ENCODE measurements at regions of chr2 and their contacts with region 1.

Region 1: DNA sequence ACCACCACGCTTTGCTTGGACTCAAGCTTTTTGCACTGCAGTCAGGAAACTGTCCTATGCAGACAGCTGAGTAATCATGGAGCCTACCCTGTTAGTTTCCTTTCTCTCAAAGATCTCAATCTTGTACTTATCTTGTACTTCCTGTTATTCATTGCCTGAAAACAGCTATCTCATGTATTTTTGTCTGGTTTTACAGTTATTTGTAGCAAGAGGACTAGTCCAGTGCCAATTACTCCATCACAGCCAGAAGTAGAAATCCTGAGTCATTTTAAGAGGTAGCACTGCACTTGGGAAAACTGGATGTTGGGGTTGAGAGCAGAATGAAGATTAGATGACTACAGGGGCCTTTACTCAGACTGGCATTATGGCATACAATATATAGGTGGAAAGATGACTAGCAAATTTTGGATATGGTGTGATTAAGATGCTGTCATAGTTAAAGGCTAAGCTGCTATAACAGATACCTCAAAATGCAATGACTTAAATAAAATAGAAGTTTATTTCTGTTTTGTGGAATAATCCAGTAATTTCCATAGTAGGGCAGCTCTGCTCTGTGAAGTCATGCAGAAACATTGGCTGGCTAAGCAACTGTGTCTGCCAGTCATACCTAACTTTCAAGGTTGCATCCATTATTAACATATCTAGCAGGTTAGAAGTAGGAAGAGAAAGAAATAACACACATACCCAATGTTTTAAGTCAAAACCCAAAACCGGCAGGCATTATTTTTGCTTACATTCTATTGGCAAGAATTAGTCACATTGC is 21.1 kb upstream of the CHMP3 start:
- DNase-seq: peak; percentile 31
- H3K4me3 Mint-ChIP-seq: no peak overlapping the region
- H3K27ac Mint-ChIP-seq: peak overlapping the region; percentile 88
- H3K4me1 Mint-ChIP-seq: peaks cover 17% of the 10 kb centered on the region
- H3K27me3 Mint-ChIP-seq: no peaks in the 10 kb centered on the region

Region 2: GRCh38 chr2:85924522-85924921 is 659.8 kb before region 1 on chr2:
- CTCF ChIA-PET with region 1: no interaction called
- POLR2A ChIA-PET with region 1: no interaction called
- intact Hi-C with region 1: no loop called
- DNase-seq: no peak
- H3K4me3 Mint-ChIP-seq: no peak overlapping the region
- H3K27ac Mint-ChIP-seq: no peak overlapping the region
- H3K4me1 Mint-ChIP-seq: peaks cover 2% of the 10 kb centered on the region
- H3K27me3 Mint-ChIP-seq: peaks cover 2% of the 10 kb centered on the region

Region 3: DNA sequence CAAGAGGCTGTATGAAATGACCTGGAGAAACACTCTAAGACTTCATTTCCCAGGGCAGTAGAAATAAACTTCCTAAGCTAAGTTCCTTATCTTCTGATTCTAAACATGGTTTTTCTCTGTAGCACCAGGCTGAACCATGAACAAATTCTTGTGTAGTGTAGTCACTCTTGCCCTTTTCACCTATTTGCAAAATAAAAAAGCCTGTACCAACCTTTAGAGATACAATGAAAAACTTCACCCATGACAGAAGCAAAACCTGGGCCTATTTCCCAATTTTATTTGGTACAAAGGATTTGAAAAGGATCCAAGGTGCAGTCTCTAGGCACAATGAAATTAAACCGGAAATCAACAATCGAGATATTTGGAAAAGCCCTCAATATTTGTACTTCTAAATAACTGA is 522.3 kb before region 1 on chr2:
- CTCF ChIA-PET with region 1: no interaction called
- POLR2A ChIA-PET with region 1: no interaction called
- intact Hi-C with region 1: no loop called
- DNase-seq: no peak
- H3K4me3 Mint-ChIP-seq: no peak overlapping the region
- H3K27ac Mint-ChIP-seq: no peak overlapping the region
- H3K4me1 Mint-ChIP-seq: no peaks in the 10 kb centered on the region
- H3K27me3 Mint-ChIP-seq: no peaks in the 10 kb centered on the region

Region 4: GRCh38 chr2:86482034-86482433 is 102.3 kb before region 1 on chr2:
- CTCF ChIA-PET with region 1: no interaction called
- POLR2A ChIA-PET with region 1: no interaction called
- intact Hi-C with region 1: loop called (anchors 1 kb)
- DNase-seq: peak; percentile 35
- H3K4me3 Mint-ChIP-seq: no peak overlapping the region
- H3K27ac Mint-ChIP-seq: peak overlapping the region; percentile 16
- H3K4me1 Mint-ChIP-seq: peaks cover 48% of the 10 kb centered on the region
- H3K27me3 Mint-ChIP-seq: no peaks in the 10 kb centered on the region

Region 5: DNA sequence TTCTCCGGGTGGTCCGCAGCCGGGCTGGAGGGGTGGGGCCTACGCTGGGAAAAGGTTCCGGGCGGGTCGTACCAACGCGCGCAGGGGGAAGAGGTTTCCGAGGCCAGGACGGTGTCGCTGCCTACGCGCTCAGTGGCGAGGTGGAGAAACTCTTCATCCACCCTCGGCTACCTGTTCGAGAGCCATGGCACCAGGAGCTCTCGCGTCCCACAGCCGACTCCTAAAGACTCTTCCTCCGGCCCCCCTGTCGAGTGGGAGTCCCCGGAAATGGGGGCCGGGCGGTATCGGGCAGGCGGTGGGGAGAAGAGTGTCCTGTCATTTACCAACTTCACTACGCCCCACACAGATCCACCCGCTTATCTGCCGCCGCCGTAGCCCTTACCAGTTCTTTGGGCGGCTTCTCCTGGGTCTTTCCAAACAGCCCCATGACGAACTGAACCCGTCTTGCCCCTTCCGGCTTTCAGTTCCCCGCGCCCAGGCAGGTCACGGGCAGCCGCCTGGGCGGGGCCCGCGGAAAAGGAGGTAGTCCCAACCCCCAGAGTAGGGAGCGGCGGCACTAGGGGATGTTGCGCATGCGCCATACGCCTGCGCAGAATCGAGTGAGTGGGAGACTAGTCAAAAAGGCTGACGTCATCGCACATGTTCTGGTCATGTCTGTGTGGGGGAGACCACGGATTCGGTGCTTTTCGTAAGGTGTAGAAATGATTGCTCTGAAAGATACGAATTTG is 21.2 kb before region 1 on chr2 and contains the start of gene CHMP3:
- CTCF ChIA-PET with region 1: no interaction called
- POLR2A ChIA-PET with region 1: interaction called, 3 read pairs
- intact Hi-C with region 1: loop called (anchors 2 kb)
- DNase-seq: peak; percentile 98
- H3K4me3 Mint-ChIP-seq: peak within 1 kb of the TSS; percentile 94
- H3K27ac Mint-ChIP-seq: peak within 1 kb of the TSS; percentile 98
- H3K4me1 Mint-ChIP-seq: peaks cover 27% of the 10 kb centered on the region
- H3K27me3 Mint-ChIP-seq: no peaks in the 10 kb centered on the region
- total RNA-seq, gene CHMP3: 36.5 to 38.6 TPM

Region 6: DNA sequence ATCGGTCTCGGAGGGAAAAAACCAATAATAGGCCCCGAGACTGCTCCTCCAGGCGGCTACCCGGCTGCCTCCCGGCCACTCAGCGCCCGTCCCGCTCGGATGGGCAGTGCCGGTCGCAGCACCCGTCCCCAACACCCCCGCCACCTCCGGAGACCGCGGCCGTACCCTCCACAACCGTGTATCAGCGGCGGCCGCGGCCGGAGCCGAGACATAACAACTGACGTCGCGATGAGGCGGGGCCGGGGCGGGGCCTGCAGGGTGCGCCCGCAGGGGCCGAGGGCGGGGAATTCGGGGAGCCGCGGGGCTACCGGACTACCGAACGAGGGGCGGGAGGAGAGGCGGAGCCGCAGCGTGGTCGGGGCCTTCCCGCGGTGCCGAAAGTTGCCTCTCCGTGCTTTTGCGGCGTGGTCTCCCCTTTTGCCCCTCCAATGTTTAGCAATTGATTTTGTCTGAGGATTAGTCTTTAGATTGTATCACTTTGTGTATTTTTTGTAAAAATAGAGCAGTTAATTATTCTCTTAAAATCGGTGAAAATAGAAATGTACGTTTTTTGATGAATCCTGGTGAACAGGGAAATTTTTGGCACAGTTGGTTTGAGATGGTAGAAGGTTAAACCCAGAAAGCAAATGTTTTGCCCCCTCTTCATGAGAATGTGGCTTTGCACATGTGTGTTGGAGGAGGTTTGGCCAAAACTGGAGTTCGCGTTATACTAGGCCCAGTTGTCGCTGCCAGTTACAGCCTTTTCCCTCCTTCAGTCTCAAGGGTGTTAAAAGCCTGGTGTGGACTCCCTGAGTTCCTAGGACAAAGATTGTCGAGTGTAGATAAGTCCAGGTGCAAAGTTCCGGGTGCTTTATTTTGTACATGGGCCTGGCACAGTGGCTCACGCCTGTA is 39.6 kb after region 1 on chr2 and contains the start of gene RNF103:
- CTCF ChIA-PET with region 1: interaction called, 3 read pairs
- POLR2A ChIA-PET with region 1: interaction called, 6 read pairs
- intact Hi-C with region 1: loop called (anchors 1 kb)
- DNase-seq: peak; percentile 95
- H3K4me3 Mint-ChIP-seq: peak within 1 kb of the TSS; percentile 95
- H3K27ac Mint-ChIP-seq: peak within 1 kb of the TSS; percentile 92
- H3K4me1 Mint-ChIP-seq: peaks cover 32% of the 10 kb centered on the region
- H3K27me3 Mint-ChIP-seq: peaks cover 4% of the 10 kb centered on the region
- total RNA-seq, gene RNF103: 12.3 to 13.1 TPM